ENCODE measurements at regions of chr18 and their contacts with region 1.

Region 1: GRCh38 chr18:22933206-22933957 is at the start of gene RBBP8:
- DNase-seq: peak; percentile 36
- ATAC-seq: peak; percentile 85
- H3K4me3 ChIP-seq: peak within 1 kb of the TSS; percentile 86
- H3K27ac ChIP-seq: peak within 1 kb of the TSS; percentile 92
- H3K4me1 ChIP-seq: peaks cover 6% of the 10 kb centered on the region
- H3K27me3 ChIP-seq: no peaks in the 10 kb centered on the region
- CTCF ChIP-seq: no peak
- EP300 ChIP-seq: no peak
- POLR2A ChIP-seq: peak; percentile 80
- RAD21 ChIP-seq: no peak
- polyA plus RNA-seq, gene RBBP8: 49.4 to 59.5 TPM

Region 2: GRCh38 chr18:21111341-21112139 is 1821.8 kb before region 1 on chr18 and contains the start of gene ROCK1:
- CTCF ChIA-PET with region 1: no interaction called
- POLR2A ChIA-PET with region 1: no interaction called
- RAD21 ChIA-PET with region 1: no interaction called
- SMC1A ChIA-PET with region 1: no interaction called
- in situ Hi-C with region 1: loop called (anchors 25 kb)
- intact Hi-C with region 1: no loop called
- DNase-seq: peak; percentile 65
- ATAC-seq: peak; percentile 91
- H3K4me3 ChIP-seq: peak within 1 kb of the TSS; percentile 92
- H3K27ac ChIP-seq: peak within 1 kb of the TSS; percentile 96
- H3K4me1 ChIP-seq: no peaks in the 10 kb centered on the region
- H3K27me3 ChIP-seq: no peaks in the 10 kb centered on the region
- CTCF ChIP-seq: no peak
- EP300 ChIP-seq: no peak
- POLR2A ChIP-seq: peak; percentile 73; the same call in 1 of the 2 replicates
- RAD21 ChIP-seq: no peak
- polyA plus RNA-seq, gene ROCK1: 14.8 to 15.1 TPM

Region 3: GRCh38 chr18:22913857-22914256 is 19.5 kb before region 1 on chr18:
- CTCF ChIA-PET with region 1: interaction called, 18 read pairs
- POLR2A ChIA-PET with region 1: no interaction called
- RAD21 ChIA-PET with region 1: interaction called, 3 read pairs
- SMC1A ChIA-PET with region 1: interaction called, 10 read pairs
- in situ Hi-C with region 1: no loop called
- intact Hi-C with region 1: no loop called
- DNase-seq: no peak
- ATAC-seq: no peak
- H3K4me3 ChIP-seq: no peak overlapping the region
- H3K27ac ChIP-seq: no peak overlapping the region
- H3K4me1 ChIP-seq: no peaks in the 10 kb centered on the region
- H3K27me3 ChIP-seq: no peaks in the 10 kb centered on the region
- CTCF ChIP-seq: no peak
- EP300 ChIP-seq: no peak
- POLR2A ChIP-seq: no peak
- RAD21 ChIP-seq: no peak

Region 4: GRCh38 chr18:22964116-22964515 is 30.7 kb after region 1 on chr18:
- CTCF ChIA-PET with region 1: interaction called, 18 read pairs
- POLR2A ChIA-PET with region 1: interaction called, 3 read pairs
- RAD21 ChIA-PET with region 1: interaction called, 3 read pairs
- SMC1A ChIA-PET with region 1: interaction called, 6 read pairs
- in situ Hi-C with region 1: no loop called
- intact Hi-C with region 1: no loop called
- DNase-seq: no peak
- ATAC-seq: no peak
- H3K4me3 ChIP-seq: no peak overlapping the region
- H3K27ac ChIP-seq: no peak overlapping the region
- H3K4me1 ChIP-seq: no peaks in the 10 kb centered on the region
- H3K27me3 ChIP-seq: no peaks in the 10 kb centered on the region
- CTCF ChIP-seq: no peak
- EP300 ChIP-seq: no peak
- POLR2A ChIP-seq: no peak
- RAD21 ChIP-seq: no peak

Region 5: DNA sequence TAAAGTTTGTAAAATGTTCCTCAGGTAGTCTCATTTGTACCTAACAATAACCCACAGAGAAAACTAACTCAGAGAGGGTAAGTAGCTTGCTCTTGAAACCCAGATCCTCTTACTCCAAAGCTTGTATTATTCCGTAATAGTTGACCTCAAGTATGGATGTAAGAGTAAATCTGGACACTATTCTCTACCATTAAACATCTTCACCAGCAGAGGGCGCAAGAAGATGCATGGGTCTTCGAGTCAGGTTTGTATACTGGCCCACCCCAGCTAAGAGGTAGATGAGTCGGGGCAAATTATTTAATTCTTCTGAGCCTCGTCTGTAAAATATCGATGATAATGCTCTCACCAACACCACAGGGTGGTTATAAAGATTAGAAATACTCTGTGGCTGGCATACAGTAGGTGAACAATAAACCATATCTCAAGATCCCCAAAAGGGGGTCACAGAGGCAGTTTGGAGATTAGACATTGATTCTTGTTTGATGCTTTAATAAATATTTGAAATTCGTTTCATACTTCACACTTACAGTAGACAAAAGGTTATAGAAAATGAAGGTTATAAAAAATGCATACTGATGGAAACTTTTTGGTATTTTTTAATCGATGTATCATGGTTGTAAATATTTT is 198.4 kb after region 1 on chr18:
- CTCF ChIA-PET with region 1: interaction called, 7 read pairs
- POLR2A ChIA-PET with region 1: interaction called, 3 read pairs
- RAD21 ChIA-PET with region 1: interaction called, 9 read pairs
- SMC1A ChIA-PET with region 1: interaction called, 3 read pairs
- in situ Hi-C with region 1: no loop called
- intact Hi-C with region 1: loop called (anchors 10 kb)
- DNase-seq: peak; percentile 58
- ATAC-seq: peak; percentile 44
- H3K4me3 ChIP-seq: no peak overlapping the region
- H3K27ac ChIP-seq: no peak overlapping the region
- H3K4me1 ChIP-seq: peaks cover 18% of the 10 kb centered on the region
- H3K27me3 ChIP-seq: no peaks in the 10 kb centered on the region
- CTCF ChIP-seq: peak; percentile 64 to 82 (median 67)
- EP300 ChIP-seq: no peak
- POLR2A ChIP-seq: no peak
- RAD21 ChIP-seq: peak; percentile 89

Region 6: GRCh38 chr18:23416298-23416697 is 482.9 kb after region 1 on chr18:
- CTCF ChIA-PET with region 1: interaction called, 15 read pairs
- POLR2A ChIA-PET with region 1: no interaction called
- RAD21 ChIA-PET with region 1: interaction called, 6 read pairs
- SMC1A ChIA-PET with region 1: interaction called, 9 read pairs
- in situ Hi-C with region 1: no loop called
- intact Hi-C with region 1: loop called (anchors 10 kb)
- DNase-seq: no peak
- ATAC-seq: peak; percentile 29; the same call in 2 of the 3 replicates
- H3K4me3 ChIP-seq: no peak overlapping the region
- H3K27ac ChIP-seq: no peak overlapping the region
- H3K4me1 ChIP-seq: no peaks in the 10 kb centered on the region; the same call in 1 of the 2 replicates
- H3K27me3 ChIP-seq: no peaks in the 10 kb centered on the region
- CTCF ChIP-seq: no peak
- EP300 ChIP-seq: no peak
- POLR2A ChIP-seq: no peak
- RAD21 ChIP-seq: no peak